ENCODE measurements at regions of chr16 and their contacts with region 1.

Region 1: DNA sequence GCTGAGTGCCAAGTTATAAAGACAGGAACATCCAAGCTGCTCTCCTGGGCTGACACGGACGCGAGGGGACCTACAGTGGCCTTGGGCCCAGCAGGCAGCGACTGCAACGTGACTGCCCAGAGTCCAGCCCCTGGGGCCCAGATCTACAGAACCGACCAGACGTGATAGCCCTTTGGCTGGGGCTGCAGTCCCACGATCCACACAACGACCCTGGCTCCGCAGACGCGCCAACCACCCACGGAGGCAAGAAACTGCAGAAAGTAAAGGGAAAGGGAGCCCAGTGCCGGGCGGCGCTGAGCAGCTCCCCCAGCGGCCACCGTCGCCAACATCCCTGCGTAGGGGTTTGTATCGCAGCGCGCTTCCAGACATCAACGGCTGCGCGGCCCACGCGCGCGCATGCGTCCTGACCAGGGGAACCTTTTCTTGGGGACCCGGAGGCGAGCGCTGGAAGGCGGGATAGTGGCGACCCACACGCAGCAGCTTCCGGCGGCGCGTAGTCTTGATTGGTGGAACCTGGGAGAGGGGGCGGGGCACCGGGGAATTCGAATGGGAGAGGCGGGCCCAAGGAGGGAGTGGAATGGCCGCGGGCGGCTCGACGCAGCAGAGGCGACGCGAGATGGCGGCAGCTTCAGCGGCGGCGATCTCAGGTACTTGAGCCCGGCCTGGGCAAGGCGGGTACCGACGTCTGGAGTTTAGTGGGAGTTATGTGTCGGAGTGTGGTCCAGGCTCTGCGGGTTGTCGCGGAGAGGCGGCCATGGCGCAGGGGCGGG is at the start of gene KIF22:
- DNase-seq: peak; percentile 99
- H3K4me3 ChIP-seq: peak within 1 kb of the TSS; percentile 61 to 87
- H3K27ac ChIP-seq: peak within 1 kb of the TSS; percentile 58 to 91
- H3K4me1 ChIP-seq: peaks cover 0 to 11% of the 10 kb centered on the region in 2 experiments; a peak in 1 of 4 replicates
- H3K27me3 ChIP-seq: no peaks in the 10 kb centered on the region
- CTCF ChIP-seq: peak; percentile 69
- EP300 ChIP-seq: no peak
- RAD21 ChIP-seq: peak; percentile 51
- polyA plus RNA-seq, gene KIF22: 63.8 and 64.1 TPM in 2 replicates

Region 2: DNA sequence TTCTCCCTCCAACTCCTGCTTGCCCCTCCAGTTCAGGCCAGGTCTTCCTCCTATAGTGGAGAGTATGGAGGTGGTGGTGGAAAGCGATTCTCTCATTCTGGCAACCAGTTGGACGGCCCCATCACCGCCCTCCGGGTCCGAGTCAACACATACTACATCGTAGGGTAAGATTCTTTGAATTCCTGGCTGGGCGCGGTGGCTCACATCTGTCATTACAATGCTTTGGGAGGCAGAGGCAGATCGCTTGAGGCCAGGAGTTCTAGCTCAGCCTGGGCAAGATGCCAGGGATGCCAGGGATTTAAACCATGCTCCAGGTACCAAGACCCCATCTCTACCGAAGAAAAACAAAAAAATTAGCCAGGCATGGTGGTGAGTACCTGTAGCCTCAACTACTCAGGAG is 10.9 kb before region 1 on chr16:
- CTCF ChIA-PET with region 1: interaction called, 22 read pairs
- POLR2A ChIA-PET with region 1: interaction called, 3 read pairs
- DNase-seq: no peak
- H3K4me3 ChIP-seq: no peak overlapping the region
- H3K27ac ChIP-seq: no peak overlapping the region
- H3K4me1 ChIP-seq: no peaks in the 10 kb centered on the region
- H3K27me3 ChIP-seq: peaks cover 7% of the 10 kb centered on the region; the same call in 1 of the 2 replicates
- CTCF ChIP-seq: no peak
- EP300 ChIP-seq: no peak
- RAD21 ChIP-seq: no peak

Region 3: DNA sequence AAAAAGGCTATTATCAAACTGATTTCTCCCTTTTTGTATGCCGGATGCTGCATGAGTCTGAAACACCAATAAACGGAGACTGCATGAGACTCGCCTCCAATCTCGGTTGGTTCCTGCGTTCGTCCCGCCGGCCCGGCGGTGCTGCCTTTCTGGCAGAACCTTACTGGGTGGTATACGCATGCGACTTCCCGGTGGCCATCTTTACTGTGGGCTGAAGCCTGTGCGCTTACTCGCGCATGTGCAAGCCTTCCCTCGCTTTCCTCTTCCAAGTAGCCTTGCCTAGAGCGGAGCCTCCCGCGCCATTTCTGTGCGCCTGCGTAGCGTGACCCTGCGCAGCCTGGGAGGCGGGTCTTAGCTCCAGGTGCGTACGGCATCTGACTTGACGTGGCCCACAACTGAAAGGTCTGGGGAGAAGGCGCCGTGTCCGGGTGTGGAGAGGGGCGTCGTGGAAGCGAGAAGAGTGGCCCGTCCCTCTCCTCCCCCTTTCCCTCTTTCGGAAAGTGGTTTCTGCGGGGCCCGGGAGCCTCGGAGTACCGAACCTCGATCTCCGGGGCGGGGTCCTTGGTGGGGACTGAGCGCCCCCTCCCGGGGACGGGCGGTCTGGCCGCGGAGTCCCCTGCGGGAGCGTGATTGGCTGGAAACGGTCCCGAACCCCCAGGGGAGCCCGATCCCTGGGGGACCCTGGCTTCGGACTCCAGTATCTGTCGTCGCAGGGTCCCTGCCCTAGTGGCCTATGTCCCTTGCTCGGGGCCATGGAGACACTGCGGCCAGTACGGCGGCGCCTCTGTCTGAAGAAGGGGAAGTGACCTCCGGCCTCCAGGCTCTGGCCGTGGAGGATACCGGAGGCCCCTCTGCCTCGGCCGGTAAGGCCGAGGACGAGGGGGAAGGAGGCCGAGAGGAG is 25.7 kb after region 1 on chr16 and contains the start of gene PAGR1:
- CTCF ChIA-PET with region 1: interaction called, 10 read pairs
- POLR2A ChIA-PET with region 1: interaction called, 3 read pairs
- DNase-seq: peak; percentile 93
- H3K4me3 ChIP-seq: peak within 1 kb of the TSS; percentile 72 to 77
- H3K27ac ChIP-seq: peak within 1 kb of the TSS; percentile 64 to 94
- H3K4me1 ChIP-seq: peaks cover 26 to 55% of the 10 kb centered on the region in 2 experiments; a peak in 3 of 4 replicates
- H3K27me3 ChIP-seq: no peaks in the 10 kb centered on the region
- CTCF ChIP-seq: peak; percentile 86
- EP300 ChIP-seq: no peak
- RAD21 ChIP-seq: peak; percentile 65
- polyA plus RNA-seq, gene PAGR1: 48.5 and 57.7 TPM in 2 replicates

Measured in SK-N-SH (cell line).